B cell (primary cell): ENCODE measurements at regions of chr10 and their contacts with region 1.

Region 1: DNA sequence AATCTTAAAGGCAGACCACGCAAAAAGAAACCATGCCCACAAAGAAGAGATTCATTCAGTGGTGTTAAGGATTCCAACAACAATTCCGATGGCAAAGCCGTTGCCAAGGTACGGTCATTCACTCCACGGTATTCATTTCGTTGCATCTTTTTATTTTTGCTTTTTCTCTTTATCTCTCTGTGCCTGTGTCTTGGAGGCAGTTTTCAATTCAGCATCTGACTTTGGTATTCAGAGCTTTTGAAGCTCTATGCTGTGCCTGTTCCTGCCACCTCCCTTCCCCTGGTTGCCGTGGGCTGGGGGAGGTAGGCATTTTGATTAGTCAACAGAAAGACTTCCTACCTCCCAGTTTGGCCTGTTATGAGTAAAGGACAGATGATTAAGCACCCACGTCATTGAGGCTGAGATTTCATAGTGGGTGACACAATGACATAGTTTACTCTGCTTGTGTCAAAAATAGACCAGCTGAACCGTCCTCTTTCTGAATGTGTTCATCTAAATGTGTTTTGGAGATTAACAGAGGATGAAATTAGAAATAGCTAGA is 149.5 kb downstream of the ARID5B start:
- DNase-seq: peak; percentile 82
- ATAC-seq: peak; percentile 69
- H3K4me3 ChIP-seq: peak overlapping the region in 4 of 5 experiments; percentile 39 to 60 (median 44)
- H3K4me3 Mint-ChIP-seq: peak overlapping the region; percentile 85
- H3K27ac ChIP-seq: peak overlapping the region; percentile 85 to 92
- H3K27ac Mint-ChIP-seq: peak overlapping the region; percentile 86
- H3K4me1 ChIP-seq: peaks cover 92 to 96% of the 10 kb centered on the region in 2 donors
- H3K4me1 Mint-ChIP-seq: peaks cover 96% of the 10 kb centered on the region
- H3K27me3 ChIP-seq: no peaks in the 10 kb centered on the region
- H3K27me3 Mint-ChIP-seq: no peaks in the 10 kb centered on the region
- CTCF ChIP-seq: no peak

Region 2: GRCh38 chr10:61750929-61751471 is 300.0 kb before region 1 on chr10:
- CTCF ChIA-PET with region 1: interaction called, 4 read pairs
- POLR2A ChIA-PET with region 1: interaction called, 3 read pairs
- intact Hi-C with region 1: loop called (anchors 10 kb)
- DNase-seq: peak; percentile 79
- ATAC-seq: peak; percentile 97
- H3K4me3 ChIP-seq: no peak overlapping the region
- H3K4me3 Mint-ChIP-seq: peak overlapping the region; percentile 52
- H3K27ac ChIP-seq: no peak overlapping the region
- H3K27ac Mint-ChIP-seq: peak overlapping the region; percentile 24
- H3K4me1 ChIP-seq: peaks cover 17 to 19% of the 10 kb centered on the region in 2 donors
- H3K4me1 Mint-ChIP-seq: peaks cover 27% of the 10 kb centered on the region
- H3K27me3 ChIP-seq: no peaks in the 10 kb centered on the region
- H3K27me3 Mint-ChIP-seq: no peaks in the 10 kb centered on the region
- CTCF ChIP-seq: peak; percentile 76

Region 3: DNA sequence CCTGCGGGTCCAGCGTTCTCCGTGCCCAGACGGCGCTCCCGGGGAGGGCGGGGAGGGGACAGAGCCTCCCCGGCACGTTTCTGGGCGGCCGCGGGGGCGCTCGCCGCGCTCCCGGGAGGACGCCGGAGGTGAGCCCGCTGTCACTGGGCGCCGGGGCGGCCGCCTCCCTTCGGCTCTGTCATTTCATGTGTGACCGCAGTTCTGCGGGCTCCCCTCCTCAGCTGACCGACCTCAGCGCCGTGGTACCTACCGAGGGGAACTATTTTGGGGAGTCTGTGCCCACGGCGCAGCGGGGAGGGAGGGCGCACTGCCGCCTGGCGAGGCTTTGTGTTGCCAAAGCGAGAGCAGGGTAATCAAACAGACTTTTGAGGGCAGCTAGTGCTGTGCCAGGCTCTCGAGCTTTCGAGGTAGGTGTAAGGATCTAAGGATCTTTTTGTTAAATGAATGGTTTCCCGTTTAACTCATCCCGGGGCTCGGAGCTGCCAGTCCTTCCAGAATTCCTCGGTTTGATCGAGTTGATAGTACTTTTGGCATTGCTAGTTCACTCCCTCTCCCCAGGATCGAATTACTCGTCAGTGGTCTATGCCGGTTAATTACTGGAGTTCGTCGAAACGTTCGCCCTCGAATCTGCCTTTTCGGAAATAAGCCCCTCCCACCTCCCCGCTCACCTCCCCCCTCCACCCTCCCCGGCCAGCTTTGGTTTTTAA is 147.6 kb before region 1 on chr10:
- CTCF ChIA-PET with region 1: interaction called, 32 read pairs
- POLR2A ChIA-PET with region 1: interaction called, 24 read pairs
- intact Hi-C with region 1: loop called (anchors 2 kb)
- DNase-seq: peak; percentile 91
- ATAC-seq: peak; percentile 55
- H3K4me3 ChIP-seq: peak overlapping the region; percentile 69 to 98 (median 80)
- H3K4me3 Mint-ChIP-seq: peak overlapping the region; percentile 98
- H3K27ac ChIP-seq: peak overlapping the region; percentile 95 to 97
- H3K27ac Mint-ChIP-seq: peak overlapping the region; percentile 99
- H3K4me1 ChIP-seq: peaks cover 40 to 47% of the 10 kb centered on the region in 2 donors
- H3K4me1 Mint-ChIP-seq: peaks cover 49% of the 10 kb centered on the region
- H3K27me3 ChIP-seq: no peaks in the 10 kb centered on the region
- H3K27me3 Mint-ChIP-seq: no peaks in the 10 kb centered on the region
- CTCF ChIP-seq: peak; percentile 38

Region 4: GRCh38 chr10:62000037-62000603 is 50.8 kb before region 1 on chr10:
- CTCF ChIA-PET with region 1: interaction called, 3 read pairs
- POLR2A ChIA-PET with region 1: interaction called, 5 read pairs
- intact Hi-C with region 1: loop called (anchors 1 kb)
- DNase-seq: peak; percentile 96
- ATAC-seq: peak; percentile 84
- H3K4me3 ChIP-seq: peak overlapping the region in 4 of 5 experiments; percentile 32 to 57 (median 44)
- H3K4me3 Mint-ChIP-seq: peak overlapping the region; percentile 85
- H3K27ac ChIP-seq: peak overlapping the region; percentile 96 to 98
- H3K27ac Mint-ChIP-seq: peak overlapping the region; percentile 100
- H3K4me1 ChIP-seq: peaks cover 74 to 90% of the 10 kb centered on the region in 2 donors
- H3K4me1 Mint-ChIP-seq: peaks cover 94% of the 10 kb centered on the region
- H3K27me3 ChIP-seq: no peaks in the 10 kb centered on the region
- H3K27me3 Mint-ChIP-seq: no peaks in the 10 kb centered on the region
- CTCF ChIP-seq: no peak

Region 5: DNA sequence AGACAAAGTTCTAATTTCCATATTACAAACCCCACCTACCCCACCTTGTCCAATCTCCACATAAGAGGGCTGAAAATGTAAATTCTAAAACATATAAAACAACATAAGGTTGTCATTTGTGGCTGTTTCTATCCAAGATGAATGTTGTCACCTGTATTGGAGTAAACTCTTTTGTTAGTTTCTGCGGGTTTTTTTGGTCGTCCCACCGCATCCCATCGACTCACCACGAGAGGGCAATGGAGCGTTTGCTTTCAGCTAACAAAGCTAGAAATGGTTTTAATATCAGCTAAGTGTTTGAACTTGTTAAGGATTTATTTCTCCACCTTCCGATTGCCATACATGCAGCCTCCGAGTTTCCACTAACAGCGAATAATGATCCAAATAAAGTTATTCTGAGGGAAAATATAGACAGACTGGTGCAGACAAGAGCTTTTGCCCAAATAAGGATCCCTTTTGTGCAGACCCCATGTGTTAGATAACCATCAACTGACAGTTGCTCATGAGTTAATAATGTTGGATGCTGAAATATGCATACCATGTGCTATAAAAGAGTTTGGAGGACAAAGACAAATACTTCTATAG is 12.3 kb before region 1 on chr10:
- CTCF ChIA-PET with region 1: interaction called, 49 read pairs
- POLR2A ChIA-PET with region 1: interaction called, 7 read pairs
- intact Hi-C with region 1: loop called (anchors 1 kb)
- DNase-seq: peak; percentile 85
- ATAC-seq: peak; percentile 63
- H3K4me3 ChIP-seq: peak overlapping the region in 3 of 5 experiments; percentile 19 to 50 (median 27)
- H3K4me3 Mint-ChIP-seq: peak overlapping the region; percentile 74
- H3K27ac ChIP-seq: peak overlapping the region; percentile 59 to 84
- H3K27ac Mint-ChIP-seq: peak overlapping the region; percentile 87
- H3K4me1 ChIP-seq: peaks cover 74 to 81% of the 10 kb centered on the region in 2 donors
- H3K4me1 Mint-ChIP-seq: peaks cover 83% of the 10 kb centered on the region
- H3K27me3 ChIP-seq: no peaks in the 10 kb centered on the region
- H3K27me3 Mint-ChIP-seq: no peaks in the 10 kb centered on the region
- CTCF ChIP-seq: peak; percentile 89

Region 6: GRCh38 chr10:62082729-62083411 is 31.9 kb after region 1 on chr10:
- CTCF ChIA-PET with region 1: interaction called, 5 read pairs
- POLR2A ChIA-PET with region 1: interaction called, 5 read pairs
- intact Hi-C with region 1: loop called (anchors 2 kb)
- DNase-seq: no peak
- ATAC-seq: peak; percentile 29
- H3K4me3 ChIP-seq: peak overlapping the region; percentile 10 to 38 (median 36)
- H3K4me3 Mint-ChIP-seq: peak overlapping the region; percentile 79
- H3K27ac ChIP-seq: peak overlapping the region; percentile 90 to 91
- H3K27ac Mint-ChIP-seq: peak overlapping the region; percentile 86
- H3K4me1 ChIP-seq: peaks cover 76 to 78% of the 10 kb centered on the region in 2 donors
- H3K4me1 Mint-ChIP-seq: peaks cover 79% of the 10 kb centered on the region
- H3K27me3 ChIP-seq: no peaks in the 10 kb centered on the region
- H3K27me3 Mint-ChIP-seq: no peaks in the 10 kb centered on the region
- CTCF ChIP-seq: no peak

Region 7: DNA sequence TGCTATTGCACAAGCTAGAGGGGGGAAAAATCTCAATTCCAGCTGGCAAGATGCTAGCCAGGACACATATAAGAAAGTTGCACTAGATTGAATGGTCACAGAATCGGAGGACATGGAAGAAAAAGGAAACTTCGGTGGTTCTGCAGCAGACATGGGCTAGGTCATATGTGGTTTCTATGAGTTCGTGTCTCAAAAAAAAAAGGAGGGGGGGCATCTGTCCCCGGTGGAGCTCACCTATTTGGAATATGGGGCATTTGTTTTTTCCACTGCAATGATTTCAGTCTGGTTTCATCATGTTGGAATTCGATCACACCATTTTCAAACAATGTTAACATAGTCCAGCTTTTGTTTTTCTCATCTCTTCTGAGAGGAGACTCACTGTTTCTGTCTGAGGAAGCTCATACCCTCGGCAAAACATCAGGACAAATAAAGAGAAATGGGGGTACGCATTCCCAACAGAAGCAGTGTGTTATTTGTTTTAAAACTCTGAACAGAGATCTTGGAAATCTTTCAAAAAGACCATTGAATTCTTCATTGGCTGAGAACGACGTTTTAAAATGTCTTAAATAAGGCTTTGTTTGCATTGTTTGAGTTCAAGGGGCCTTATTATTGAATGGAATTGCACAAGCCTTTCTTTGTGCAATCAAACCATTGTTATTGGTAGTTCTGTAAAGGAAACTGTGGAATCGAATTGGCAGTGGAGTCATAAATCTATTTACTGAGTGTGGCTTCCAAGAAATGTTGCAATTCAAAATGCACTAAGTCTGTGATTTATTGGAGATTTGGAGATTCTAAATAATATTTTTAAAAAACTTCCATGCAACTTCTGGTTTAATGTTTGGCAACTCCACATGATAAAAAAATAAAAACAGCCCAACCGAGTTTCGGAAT is 44.5 kb after region 1 on chr10:
- CTCF ChIA-PET with region 1: no interaction called
- POLR2A ChIA-PET with region 1: no interaction called
- intact Hi-C with region 1: no loop called
- DNase-seq: no peak
- ATAC-seq: no peak
- H3K4me3 ChIP-seq: no peak overlapping the region
- H3K4me3 Mint-ChIP-seq: no peak overlapping the region
- H3K27ac ChIP-seq: no peak overlapping the region
- H3K27ac Mint-ChIP-seq: peak overlapping the region; percentile 66
- H3K4me1 ChIP-seq: peaks cover 0 to 3% of the 10 kb centered on the region in 2 donors
- H3K4me1 Mint-ChIP-seq: peaks cover 23% of the 10 kb centered on the region
- H3K27me3 ChIP-seq: no peaks in the 10 kb centered on the region
- H3K27me3 Mint-ChIP-seq: no peaks in the 10 kb centered on the region
- CTCF ChIP-seq: no peak